K562 (cell line): ENCODE measurements at regions of chr6 and their contacts with region 1.

Region 1: DNA sequence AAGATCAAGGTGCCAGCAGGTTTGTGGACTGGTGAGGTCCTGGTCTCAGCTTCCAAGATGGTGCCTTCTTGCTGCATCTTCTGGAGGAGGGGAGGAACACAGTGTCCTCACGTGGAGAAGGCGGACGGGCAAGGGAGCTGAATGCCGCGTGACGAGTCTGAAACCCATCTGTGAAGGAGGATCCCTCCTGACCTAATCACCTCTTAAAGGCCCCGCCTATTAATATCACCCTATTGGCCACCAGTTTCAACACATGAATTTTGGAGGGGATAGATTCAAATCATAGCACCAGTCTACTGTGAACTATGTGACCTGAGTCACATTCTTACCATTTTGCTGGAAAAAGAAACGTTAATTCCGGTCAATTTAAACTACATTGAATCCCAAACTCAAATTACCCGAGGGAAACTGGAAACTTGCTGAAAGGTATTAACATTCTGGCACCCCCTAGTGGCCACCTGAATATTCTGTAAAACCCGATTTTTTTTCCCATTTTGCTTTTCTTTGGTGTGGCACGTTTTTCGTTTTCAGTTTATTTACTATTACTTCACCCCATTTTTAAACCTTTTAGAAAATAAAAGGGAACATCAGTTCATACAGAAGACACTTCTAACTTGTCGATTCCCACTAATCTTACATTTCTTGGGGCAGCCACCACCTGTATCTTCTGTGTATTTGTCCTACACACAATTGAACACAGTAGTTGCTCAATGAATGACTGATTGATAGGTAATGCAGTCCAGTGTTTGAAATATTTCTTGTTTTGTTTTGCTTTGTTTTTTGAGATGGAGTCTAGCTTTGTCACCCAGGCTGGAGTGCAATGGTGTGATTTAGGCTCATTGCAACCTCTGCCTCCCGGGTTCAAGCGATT is 17.9 kb upstream of the CCDC170 start:
- DNase-seq: peak; percentile 57 to 70 (median 61)
- ATAC-seq: peak; percentile 85
- H3K4me3 ChIP-seq: no peak overlapping the region
- H3K27ac ChIP-seq: no peak overlapping the region
- H3K4me1 ChIP-seq: peaks cover 0 to 5% of the 10 kb centered on the region in 2 experiments; a peak in 1 of 5 replicates
- H3K27me3 ChIP-seq: peaks cover 0 to 4% of the 10 kb centered on the region in 2 experiments; a peak in 2 of 5 replicates
- CTCF ChIP-seq: peak; percentile 68 to 92 (median 82); a peak in 5 of 6 replicates
- EP300 ChIP-seq: no peak
- POLR2A ChIP-seq: no peak
- RAD21 ChIP-seq: peak; percentile 73 to 82

Region 2: DNA sequence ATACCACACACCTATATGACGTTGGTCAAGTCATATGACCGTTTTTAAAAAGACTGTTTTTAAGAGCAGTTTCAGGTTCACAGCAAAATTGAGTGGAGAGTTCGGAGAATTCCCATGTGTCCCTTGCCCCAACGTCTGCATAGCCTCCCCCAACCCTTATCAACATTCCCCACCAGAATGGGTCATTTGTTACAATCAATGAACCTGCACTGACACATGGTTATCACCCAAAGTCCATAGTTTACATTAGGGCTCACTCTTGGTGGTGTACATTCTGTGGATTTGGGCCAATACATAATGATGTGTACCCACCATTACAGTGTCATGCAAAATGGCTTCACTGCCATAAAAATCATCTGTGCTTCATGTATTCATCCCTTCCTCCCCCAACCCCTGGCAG is 136.5 kb before region 1 on chr6:
- CTCF ChIA-PET with region 1: interaction called, 3 read pairs
- POLR2A ChIA-PET with region 1: no interaction called
- in situ Hi-C with region 1: no loop called
- intact Hi-C with region 1: loop called (anchors 5 kb)
- DNase-seq: peak in 1 of 4 experiments; percentile 36
- ATAC-seq: no peak; the same call in 1 of the 3 replicates
- H3K4me3 ChIP-seq: no peak overlapping the region
- H3K27ac ChIP-seq: no peak overlapping the region
- H3K4me1 ChIP-seq: peaks cover 0 to 12% of the 10 kb centered on the region in 2 experiments; a peak in 1 of 5 replicates
- H3K27me3 ChIP-seq: peaks cover 38 to 59% of the 10 kb centered on the region in 2 experiments
- CTCF ChIP-seq: no peak
- EP300 ChIP-seq: no peak
- POLR2A ChIP-seq: no peak
- RAD21 ChIP-seq: no peak

Region 3: DNA sequence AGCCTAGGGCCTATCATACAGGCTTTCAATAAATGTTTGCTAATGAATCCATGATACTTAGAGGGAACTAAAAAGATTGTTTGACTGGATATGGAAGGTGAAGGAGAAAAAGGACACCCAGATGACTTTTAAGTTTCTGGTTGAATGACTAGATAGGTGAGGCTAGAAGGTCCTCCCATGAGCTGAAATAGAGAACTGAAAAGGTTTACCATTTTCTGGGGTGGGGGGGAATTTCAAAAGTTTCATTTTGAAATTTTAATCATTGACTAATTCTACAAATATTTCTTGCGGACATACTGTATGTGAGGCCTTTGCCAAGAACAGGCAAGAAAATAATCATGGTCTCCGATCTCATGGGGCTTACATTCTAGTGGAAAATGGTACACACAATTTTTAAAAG is 66.6 kb before region 1 on chr6:
- CTCF ChIA-PET with region 1: interaction called, 6 read pairs
- POLR2A ChIA-PET with region 1: no interaction called
- in situ Hi-C with region 1: no loop called
- intact Hi-C with region 1: loop called (anchors 2 kb)
- DNase-seq: no peak
- ATAC-seq: no peak
- H3K4me3 ChIP-seq: no peak overlapping the region
- H3K27ac ChIP-seq: no peak overlapping the region
- H3K4me1 ChIP-seq: no peaks in the 10 kb centered on the region
- H3K27me3 ChIP-seq: no peaks in the 10 kb centered on the region
- CTCF ChIP-seq: no peak
- EP300 ChIP-seq: no peak
- POLR2A ChIP-seq: no peak
- RAD21 ChIP-seq: no peak

Region 4: GRCh38 chr6:151430886-151431285 is 45.0 kb before region 1 on chr6:
- CTCF ChIA-PET with region 1: interaction called, 3 read pairs
- POLR2A ChIA-PET with region 1: no interaction called
- in situ Hi-C with region 1: no loop called
- intact Hi-C with region 1: loop called (anchors 2 kb)
- DNase-seq: no peak
- ATAC-seq: peak; percentile 79
- H3K4me3 ChIP-seq: no peak overlapping the region
- H3K27ac ChIP-seq: no peak overlapping the region
- H3K4me1 ChIP-seq: no peaks in the 10 kb centered on the region
- H3K27me3 ChIP-seq: no peaks in the 10 kb centered on the region
- CTCF ChIP-seq: peak; percentile 13 to 40 (median 24); a peak in 3 of 6 replicates
- EP300 ChIP-seq: no peak
- POLR2A ChIP-seq: no peak
- RAD21 ChIP-seq: peak in 1 of 2 experiments; percentile 52; a peak in 2 of 4 replicates

Region 5: GRCh38 chr6:151440930-151441329 is 35.0 kb before region 1 on chr6:
- CTCF ChIA-PET with region 1: interaction called, 9 read pairs
- POLR2A ChIA-PET with region 1: interaction called, 4 read pairs
- in situ Hi-C with region 1: no loop called
- intact Hi-C with region 1: loop called (anchors 5 kb)
- DNase-seq: no peak
- ATAC-seq: no peak
- H3K4me3 ChIP-seq: no peak overlapping the region
- H3K27ac ChIP-seq: no peak overlapping the region
- H3K4me1 ChIP-seq: no peaks in the 10 kb centered on the region; a peak in 1 of 5 replicates
- H3K27me3 ChIP-seq: no peaks in the 10 kb centered on the region
- CTCF ChIP-seq: peak in 2 of 3 experiments; percentile 18 to 44; a peak in 3 of 6 replicates
- EP300 ChIP-seq: no peak
- POLR2A ChIP-seq: no peak
- RAD21 ChIP-seq: peak in 1 of 2 experiments; percentile 48; a peak in 2 of 4 replicates

Region 6: DNA sequence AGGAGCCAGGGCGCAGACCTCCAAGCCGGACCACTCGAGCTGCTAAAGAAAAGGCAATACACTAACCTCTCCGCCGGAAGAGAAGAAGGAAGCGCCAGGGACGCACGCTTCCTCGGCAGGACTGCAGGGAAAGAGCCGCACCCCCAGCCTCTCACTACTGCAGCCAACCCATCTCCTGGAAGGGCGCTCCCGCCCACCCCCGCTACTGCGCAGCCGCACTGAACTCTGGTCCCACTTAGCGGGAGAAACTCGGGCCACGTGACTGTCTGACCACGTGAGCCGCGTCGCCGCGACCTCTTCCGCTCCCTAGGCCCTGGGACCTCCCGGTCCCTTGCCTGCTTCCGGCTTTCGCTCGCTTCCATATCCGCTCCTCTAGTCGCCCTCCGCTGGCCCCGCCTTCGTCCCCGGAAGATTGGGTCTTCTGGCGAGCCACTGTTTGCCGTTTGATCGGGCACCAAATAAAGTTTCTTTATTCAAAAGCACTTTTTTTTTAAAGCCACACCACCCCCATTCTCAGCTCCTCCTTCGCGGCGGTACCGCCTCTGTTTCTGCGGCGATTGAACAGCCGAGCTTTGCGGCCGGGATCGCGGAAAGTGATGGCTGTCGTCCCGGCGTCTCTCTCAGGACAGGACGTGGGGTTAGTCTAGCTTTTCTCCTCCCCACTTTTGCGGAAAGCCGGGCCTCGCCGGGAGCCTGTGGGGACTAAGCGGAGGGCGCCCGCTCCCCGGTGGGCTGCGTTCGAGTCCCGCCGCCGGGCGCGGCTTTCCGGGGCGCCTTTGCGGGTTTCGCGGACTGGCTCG is 23.7 kb before region 1 on chr6 and contains the start of gene RMND1:
- CTCF ChIA-PET with region 1: no interaction called
- POLR2A ChIA-PET with region 1: interaction called, 3 read pairs
- in situ Hi-C with region 1: no loop called
- intact Hi-C with region 1: loop called (anchors 1 kb)
- DNase-seq: peak; percentile 99 to 100 (median 99)
- ATAC-seq: peak; percentile 97
- H3K4me3 ChIP-seq: peak within 1 kb of the TSS; percentile 75
- H3K27ac ChIP-seq: peak within 1 kb of the TSS; percentile 78
- H3K4me1 ChIP-seq: peaks cover 0 to 7% of the 10 kb centered on the region in 2 experiments; a peak in 4 of 5 replicates
- H3K27me3 ChIP-seq: no peaks in the 10 kb centered on the region
- CTCF ChIP-seq: no peak
- EP300 ChIP-seq: peak; percentile 73
- POLR2A ChIP-seq: peak; percentile 94
- RAD21 ChIP-seq: no peak
- polyA plus RNA-seq, gene RMND1: 36.2 to 38.4 TPM

Region 7: GRCh38 chr6:151488226-151488625 is 12.3 kb after region 1 on chr6:
- CTCF ChIA-PET with region 1: no interaction called
- POLR2A ChIA-PET with region 1: no interaction called
- in situ Hi-C with region 1: no loop called
- intact Hi-C with region 1: no loop called
- DNase-seq: no peak
- ATAC-seq: no peak
- H3K4me3 ChIP-seq: no peak overlapping the region
- H3K27ac ChIP-seq: no peak overlapping the region
- H3K4me1 ChIP-seq: no peaks in the 10 kb centered on the region
- H3K27me3 ChIP-seq: peaks cover 24 to 28% of the 10 kb centered on the region in 2 experiments
- CTCF ChIP-seq: no peak
- EP300 ChIP-seq: no peak
- POLR2A ChIP-seq: no peak
- RAD21 ChIP-seq: no peak

Region 8: DNA sequence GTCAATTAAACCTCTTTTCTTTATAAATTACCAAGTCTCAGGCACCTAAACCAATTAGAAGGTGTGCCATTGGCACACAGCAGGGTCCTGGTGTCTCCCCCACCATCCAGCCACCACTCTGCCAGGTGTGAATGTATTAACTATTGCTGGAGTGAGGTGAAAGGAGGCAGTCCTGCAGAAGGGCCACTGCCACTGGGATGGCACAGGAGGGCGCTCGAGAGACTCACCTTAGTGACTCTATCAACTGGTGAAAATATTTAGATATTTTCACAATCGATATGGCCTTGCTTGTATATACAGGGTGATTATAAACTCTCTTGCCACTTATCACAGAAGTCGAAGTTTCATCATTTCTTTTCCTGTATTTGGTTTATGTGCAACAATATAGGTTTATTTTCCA is 186.0 kb after region 1 on chr6:
- CTCF ChIA-PET with region 1: no interaction called
- POLR2A ChIA-PET with region 1: no interaction called
- in situ Hi-C with region 1: no loop called
- intact Hi-C with region 1: no loop called
- DNase-seq: peak in 2 of 4 experiments; percentile 29 to 32
- ATAC-seq: peak; percentile 91
- H3K4me3 ChIP-seq: no peak overlapping the region
- H3K27ac ChIP-seq: no peak overlapping the region
- H3K4me1 ChIP-seq: no peaks in the 10 kb centered on the region
- H3K27me3 ChIP-seq: no peaks in the 10 kb centered on the region
- CTCF ChIP-seq: peak; percentile 61 to 75 (median 63)
- EP300 ChIP-seq: no peak
- POLR2A ChIP-seq: no peak
- RAD21 ChIP-seq: peak in 1 of 2 experiments; percentile 34; a peak in 1 of 4 replicates